ENCODE measurements at regions of chr2 and their contacts with region 1.

Region 1: DNA sequence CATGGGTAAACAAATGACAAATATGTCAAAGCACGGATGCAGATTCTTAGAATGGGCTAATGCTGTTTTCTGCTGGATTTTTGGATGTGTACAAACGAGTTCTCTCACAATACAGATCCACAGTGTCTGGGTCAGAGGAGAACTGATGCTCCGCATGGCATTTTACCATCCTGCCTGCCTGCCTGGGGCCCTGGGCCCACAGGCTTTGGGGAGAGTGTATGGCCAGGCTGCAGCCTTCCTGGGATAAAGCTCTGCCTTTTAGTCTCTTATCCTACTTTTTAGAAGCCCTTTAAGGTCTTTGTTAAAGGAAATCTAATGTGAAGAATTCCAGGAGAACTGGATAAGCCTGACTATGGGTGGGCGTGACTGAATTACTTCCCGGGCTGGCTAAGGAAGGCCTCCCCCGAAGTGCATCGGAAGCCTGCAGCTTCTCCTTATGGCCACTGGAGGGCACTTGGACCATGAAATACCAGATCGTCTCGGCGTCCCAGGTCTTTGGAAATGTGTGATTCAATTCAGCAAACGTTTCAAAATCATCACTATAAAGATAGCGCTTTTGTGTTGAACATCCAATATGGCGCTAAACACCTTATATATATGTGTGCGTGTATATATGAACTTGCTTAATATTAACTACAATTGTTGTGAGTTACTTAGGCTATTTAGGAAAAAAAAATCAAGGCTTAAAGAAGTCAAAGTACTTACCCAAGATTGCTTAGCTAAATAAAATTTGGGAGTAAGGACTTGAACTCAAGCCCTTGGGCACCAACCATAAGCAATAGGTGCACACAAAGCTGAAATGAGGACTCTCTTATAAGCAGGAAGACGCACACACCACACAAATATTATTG is 15.2 kb upstream of the DNPEP start:
- DNase-seq: peak; percentile 78
- ATAC-seq: peak; percentile 95
- H3K4me3 Mint-ChIP-seq: no peak overlapping the region
- H3K27ac Mint-ChIP-seq: no peak overlapping the region
- H3K4me1 Mint-ChIP-seq: peaks cover 1% of the 10 kb centered on the region
- H3K27me3 Mint-ChIP-seq: peaks cover 2% of the 10 kb centered on the region

Region 2: GRCh38 chr2:219433666-219434467 is 31.0 kb after region 1 on chr2:
- CTCF ChIA-PET with region 1: interaction called, 12 read pairs
- POLR2A ChIA-PET with region 1: no interaction called
- intact Hi-C with region 1: loop called in 1 of 2 experiments (anchors 1 kb)
- DNase-seq: peak; percentile 71
- ATAC-seq: peak; percentile 67
- H3K4me3 Mint-ChIP-seq: no peak overlapping the region
- H3K27ac Mint-ChIP-seq: no peak overlapping the region
- H3K4me1 Mint-ChIP-seq: no peaks in the 10 kb centered on the region
- H3K27me3 Mint-ChIP-seq: peaks cover 19% of the 10 kb centered on the region

Region 3: DNA sequence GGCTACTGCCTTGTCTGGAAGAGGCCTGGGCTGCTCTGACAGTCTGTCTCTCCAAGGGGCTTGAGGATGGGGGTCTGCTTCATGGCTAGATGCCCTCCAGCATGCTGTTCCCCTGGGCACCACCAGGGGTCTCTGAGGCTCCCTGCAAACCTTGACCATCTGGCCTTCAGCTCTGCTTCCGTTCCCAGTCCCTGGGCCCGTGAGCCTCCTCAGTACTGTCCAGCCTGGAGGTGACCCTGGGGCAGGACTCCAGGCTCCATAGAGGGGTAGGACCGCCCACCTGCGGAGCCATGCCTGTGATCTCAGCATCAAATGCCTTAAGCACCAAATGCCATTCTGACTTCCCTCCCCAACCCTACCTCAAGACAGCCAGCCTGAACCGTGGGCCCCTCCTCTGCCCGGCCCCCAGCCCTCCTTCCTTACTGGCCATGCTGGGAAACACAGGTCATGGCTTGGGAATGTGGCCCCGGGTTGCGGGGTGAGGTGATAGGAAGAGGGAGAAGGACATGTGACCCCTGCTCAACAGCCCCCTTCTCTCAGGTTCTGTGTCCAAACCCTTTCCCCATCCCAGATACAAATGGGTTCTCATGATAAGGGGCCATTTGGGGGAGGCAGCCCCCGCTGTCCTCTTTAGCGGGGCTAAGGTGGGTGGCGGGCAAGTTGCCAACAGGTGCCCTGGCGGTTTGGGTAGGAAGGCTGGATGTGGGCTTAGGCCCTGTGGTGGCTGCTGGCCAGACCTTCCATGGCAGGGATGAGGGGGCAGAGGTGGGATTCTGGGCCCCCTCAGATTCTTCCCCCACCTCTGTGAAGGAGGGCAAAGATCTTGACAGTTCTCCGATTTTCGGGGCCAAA is 56.8 kb after region 1 on chr2:
- CTCF ChIA-PET with region 1: interaction called, 5 read pairs
- POLR2A ChIA-PET with region 1: no interaction called
- intact Hi-C with region 1: loop called (anchors 2 kb)
- DNase-seq: peak; percentile 64
- ATAC-seq: peak; percentile 46
- H3K4me3 Mint-ChIP-seq: no peak overlapping the region
- H3K27ac Mint-ChIP-seq: no peak overlapping the region
- H3K4me1 Mint-ChIP-seq: peaks cover 4% of the 10 kb centered on the region
- H3K27me3 Mint-ChIP-seq: no peaks in the 10 kb centered on the region

Region 4: DNA sequence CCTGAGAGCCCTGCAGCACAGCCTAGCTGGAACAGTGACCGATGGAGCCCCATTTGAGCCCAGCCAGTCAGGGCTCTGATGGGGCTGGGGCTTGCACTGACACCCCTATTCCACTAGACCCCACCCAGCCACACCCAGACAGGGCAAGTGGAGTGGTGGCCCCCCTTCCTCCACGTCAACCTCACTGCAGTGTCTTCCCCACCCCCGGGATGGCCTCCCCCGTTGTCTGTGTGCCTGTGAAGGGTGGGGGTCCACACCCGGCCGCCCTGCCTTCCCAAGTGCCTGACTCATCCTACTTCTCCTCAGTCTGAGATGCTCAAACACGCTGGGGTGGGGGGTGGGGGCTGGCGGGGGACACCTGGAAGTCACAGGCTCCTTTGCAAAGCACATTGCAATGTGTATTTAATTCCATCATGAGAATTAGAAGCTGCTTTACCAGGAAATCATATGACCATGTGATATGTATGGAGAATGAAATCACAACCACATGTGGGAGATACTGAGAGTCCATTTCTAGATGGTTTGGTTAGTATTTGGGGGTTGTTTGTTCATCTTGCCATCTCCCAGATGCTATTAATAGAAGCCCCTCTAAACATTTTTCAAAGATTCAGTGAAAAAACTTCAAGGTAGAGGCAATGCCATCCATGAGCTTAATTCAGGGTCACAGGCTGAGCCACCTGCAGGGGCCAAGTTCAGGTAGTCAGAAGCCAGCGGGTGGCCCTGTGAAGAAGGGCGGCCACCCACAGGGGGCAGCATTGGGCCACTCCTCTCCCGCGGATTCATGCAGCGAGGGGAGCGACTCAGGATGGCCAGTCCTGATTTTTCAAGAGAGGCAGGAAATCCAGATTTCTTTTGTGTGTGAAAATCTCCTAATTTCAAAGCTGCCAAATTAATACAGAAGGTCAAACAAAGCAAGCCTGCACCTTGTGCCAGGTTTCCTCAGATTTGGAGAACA is 73.1 kb after region 1 on chr2:
- CTCF ChIA-PET with region 1: interaction called, 4 read pairs
- POLR2A ChIA-PET with region 1: no interaction called
- intact Hi-C with region 1: loop called in 1 of 2 experiments (anchors 1 kb)
- DNase-seq: peak; percentile 86
- ATAC-seq: peak; percentile 94
- H3K4me3 Mint-ChIP-seq: no peak overlapping the region
- H3K27ac Mint-ChIP-seq: no peak overlapping the region
- H3K4me1 Mint-ChIP-seq: peaks cover 4% of the 10 kb centered on the region
- H3K27me3 Mint-ChIP-seq: no peaks in the 10 kb centered on the region